ENCODE measurements at regions of chr17 and their contacts with region 1.

Region 1: DNA sequence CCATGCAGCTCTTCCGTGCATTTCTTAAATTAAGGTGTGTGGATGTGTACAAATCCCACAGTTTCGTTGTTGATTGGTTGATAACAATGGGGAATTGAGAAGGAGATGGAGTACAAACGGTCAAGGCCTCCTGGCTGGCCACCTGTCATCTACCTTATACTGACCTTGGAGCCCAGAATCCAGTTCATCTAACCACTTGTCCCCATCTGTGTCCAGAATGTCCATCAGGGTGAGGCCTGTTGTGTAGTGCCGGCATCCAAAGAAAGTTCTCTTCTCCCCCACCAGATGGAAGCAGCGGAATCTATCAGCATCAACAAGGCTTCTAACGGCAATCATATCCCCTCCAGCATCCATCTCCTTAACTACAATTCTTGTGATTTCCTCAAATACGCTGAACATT is 1.5 kb downstream of the GSDMB start:
- DNase-seq: no peak
- H3K4me3 ChIP-seq: no peak overlapping the region
- CTCF ChIP-seq: no peak
- POLR2A ChIP-seq: no peak

Region 2: GRCh38 chr17:39863918-39864746 is 52.8 kb before region 1 on chr17 and contains the start of gene IKZF3:
- intact Hi-C with region 1: loop called (anchors 10 kb)
- DNase-seq: peak; percentile 15 to 88
- H3K4me3 ChIP-seq: no peak within 1 kb of the TSS
- CTCF ChIP-seq: no peak
- POLR2A ChIP-seq: no peak
- total RNA-seq, gene IKZF3: 0.89 to 1.8 (median 0.97) TPM

Measured in lower leg skin (tissue), 4 donors.